GM12878 (cell line): ENCODE measurements at regions of chr12 and their contacts with region 1.

Region 1: DNA sequence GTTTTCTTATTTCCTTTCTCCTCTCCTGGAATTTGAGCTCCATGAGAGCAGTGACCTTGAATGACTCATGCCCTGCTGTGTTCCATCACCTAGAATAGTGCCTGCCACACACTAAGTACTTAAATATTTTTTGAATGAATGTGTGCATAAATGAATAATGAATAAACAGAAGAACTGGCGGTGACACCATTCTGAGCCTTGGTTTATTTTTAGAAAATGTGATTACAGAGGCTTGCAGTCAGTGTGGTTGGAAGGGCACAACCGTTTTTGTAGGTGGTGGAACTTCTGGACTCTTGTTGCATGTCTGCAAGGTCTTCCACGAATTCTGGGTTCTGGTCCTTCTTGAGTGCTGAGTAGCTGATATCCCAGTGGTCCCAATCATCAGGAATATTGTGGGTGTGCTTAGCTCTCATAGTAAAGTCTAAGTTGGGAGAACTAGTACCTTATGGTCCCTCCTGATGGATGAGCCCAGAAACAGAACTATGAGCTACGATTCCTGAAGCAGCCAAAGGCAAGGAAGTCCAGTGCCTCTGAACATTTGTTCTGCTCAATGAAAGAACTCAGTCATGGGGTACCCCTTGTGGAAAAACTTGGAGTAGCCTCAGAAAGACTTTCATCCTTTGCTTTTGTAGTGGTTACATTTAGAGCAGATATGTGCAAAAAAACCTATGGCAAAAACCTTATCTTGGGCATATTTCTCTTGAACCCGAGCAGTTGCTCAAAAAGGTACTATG is 28.8 kb upstream of the BHLHE41 start:
- DNase-seq: no peak
- ATAC-seq: no peak
- H3K4me3 ChIP-seq: no peak overlapping the region
- H3K27ac ChIP-seq: no peak overlapping the region
- H3K4me1 ChIP-seq: peaks cover 35% of the 10 kb centered on the region
- H3K27me3 ChIP-seq: no peaks in the 10 kb centered on the region
- CTCF ChIP-seq: no peak
- EP300 ChIP-seq: no peak
- POLR2A ChIP-seq: no peak
- RAD21 ChIP-seq: no peak

Region 2: GRCh38 chr12:25725931-25726330 is 427.7 kb before region 1 on chr12:
- CTCF ChIA-PET with region 1: no interaction called
- POLR2A ChIA-PET with region 1: no interaction called
- RAD21 ChIA-PET with region 1: no interaction called
- SMC1A ChIA-PET with region 1: no interaction called
- in situ Hi-C with region 1: no loop called
- intact Hi-C with region 1: no loop called
- DNase-seq: no peak
- ATAC-seq: no peak
- H3K4me3 ChIP-seq: no peak overlapping the region
- H3K27ac ChIP-seq: no peak overlapping the region
- H3K4me1 ChIP-seq: no peaks in the 10 kb centered on the region
- H3K27me3 ChIP-seq: no peaks in the 10 kb centered on the region; a peak in 1 of 4 replicates
- CTCF ChIP-seq: no peak
- EP300 ChIP-seq: no peak
- POLR2A ChIP-seq: no peak
- RAD21 ChIP-seq: no peak

Region 3: GRCh38 chr12:26126340-26127284 is 27.0 kb before region 1 on chr12:
- CTCF ChIA-PET with region 1: interaction called, 74 read pairs
- POLR2A ChIA-PET with region 1: interaction called, 9 read pairs
- RAD21 ChIA-PET with region 1: interaction called, 26 read pairs
- SMC1A ChIA-PET with region 1: interaction called, 91 read pairs
- in situ Hi-C with region 1: no loop called
- intact Hi-C with region 1: loop called (anchors 1 kb)
- DNase-seq: no peak
- ATAC-seq: peak; percentile 73
- H3K4me3 ChIP-seq: peak overlapping the region; percentile 80
- H3K27ac ChIP-seq: no peak overlapping the region
- H3K4me1 ChIP-seq: peaks cover 20% of the 10 kb centered on the region
- H3K27me3 ChIP-seq: peaks cover 10 to 41% of the 10 kb centered on the region in 2 experiments
- CTCF ChIP-seq: no peak
- EP300 ChIP-seq: no peak
- POLR2A ChIP-seq: no peak
- RAD21 ChIP-seq: no peak

Region 4: GRCh38 chr12:26172013-26172412 is 18.4 kb after region 1 on chr12:
- CTCF ChIA-PET with region 1: interaction called, 4 read pairs
- POLR2A ChIA-PET with region 1: interaction called, 4 read pairs
- RAD21 ChIA-PET with region 1: interaction called, 10 read pairs
- SMC1A ChIA-PET with region 1: interaction called, 22 read pairs
- in situ Hi-C with region 1: no loop called
- intact Hi-C with region 1: no loop called
- DNase-seq: no peak
- ATAC-seq: no peak
- H3K4me3 ChIP-seq: no peak overlapping the region
- H3K27ac ChIP-seq: no peak overlapping the region
- H3K4me1 ChIP-seq: no peaks in the 10 kb centered on the region; the same call in none of the 2 replicates
- H3K27me3 ChIP-seq: no peaks in the 10 kb centered on the region; a peak in 1 of 4 replicates
- CTCF ChIP-seq: no peak
- EP300 ChIP-seq: no peak
- POLR2A ChIP-seq: no peak
- RAD21 ChIP-seq: no peak

Region 5: GRCh38 chr12:26187014-26187798 is 33.6 kb after region 1 on chr12:
- CTCF ChIA-PET with region 1: no interaction called
- POLR2A ChIA-PET with region 1: no interaction called
- RAD21 ChIA-PET with region 1: interaction called, 18 read pairs
- SMC1A ChIA-PET with region 1: interaction called, 3 read pairs
- in situ Hi-C with region 1: no loop called
- intact Hi-C with region 1: no loop called
- DNase-seq: no peak
- ATAC-seq: peak; percentile 63
- H3K4me3 ChIP-seq: no peak overlapping the region
- H3K27ac ChIP-seq: no peak overlapping the region
- H3K4me1 ChIP-seq: no peaks in the 10 kb centered on the region
- H3K27me3 ChIP-seq: peaks cover 0 to 4% of the 10 kb centered on the region in 2 experiments; a peak in 2 of 4 replicates
- CTCF ChIP-seq: peak; percentile 5 to 31 (median 13); a peak in 1 of 6 replicates
- EP300 ChIP-seq: no peak
- POLR2A ChIP-seq: no peak
- RAD21 ChIP-seq: peak; percentile 30; the same call in 1 of the 2 replicates

Region 6: DNA sequence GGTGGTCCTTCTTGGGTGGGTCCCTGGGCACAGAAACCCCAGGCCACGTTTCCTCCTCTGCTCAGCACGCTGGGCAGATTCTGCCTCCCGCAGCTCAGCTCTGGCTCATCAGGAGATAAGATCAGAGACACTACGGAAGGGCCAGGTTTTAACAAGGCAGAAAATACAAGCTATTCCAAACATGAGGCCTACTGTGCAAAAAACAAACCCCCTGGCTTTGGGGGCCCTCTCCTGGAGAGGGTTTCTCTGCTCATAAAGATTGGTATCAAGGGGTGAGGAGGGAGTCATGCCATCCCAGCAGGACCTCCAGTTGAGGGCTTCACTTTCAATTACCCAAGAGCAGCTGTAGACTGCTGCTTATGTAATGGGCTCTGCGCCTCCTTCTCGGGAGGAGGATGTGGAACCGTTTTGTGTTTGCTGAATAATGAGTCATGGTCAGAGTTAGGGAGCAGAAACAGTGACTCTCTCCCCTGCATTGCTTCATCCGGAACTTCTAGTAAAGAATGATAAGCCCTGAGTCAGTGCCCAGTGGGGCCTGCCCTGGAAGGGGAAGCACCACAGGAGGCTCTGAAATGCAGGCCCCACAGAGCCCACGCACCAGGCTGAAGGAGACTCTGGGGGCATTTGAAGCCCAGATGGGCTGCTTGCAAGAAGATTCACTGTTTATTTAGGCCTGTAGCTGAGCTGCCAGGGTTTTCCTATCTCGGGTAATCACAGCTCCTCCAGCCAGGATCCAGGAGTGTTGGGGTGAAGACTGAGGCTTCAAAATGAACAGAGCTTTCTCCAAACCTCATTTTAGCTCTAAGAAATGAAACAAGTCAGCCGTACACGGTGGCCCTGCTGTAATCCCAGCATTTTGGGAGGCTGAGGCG is 121.1 kb after region 1 on chr12:
- CTCF ChIA-PET with region 1: interaction called, 15 read pairs
- POLR2A ChIA-PET with region 1: interaction called, 11 read pairs
- RAD21 ChIA-PET with region 1: interaction called, 76 read pairs
- SMC1A ChIA-PET with region 1: interaction called, 93 read pairs
- in situ Hi-C with region 1: no loop called
- intact Hi-C with region 1: loop called (anchors 2 kb)
- DNase-seq: peak; percentile 94
- ATAC-seq: peak; percentile 95
- H3K4me3 ChIP-seq: no peak overlapping the region
- H3K27ac ChIP-seq: peak overlapping the region; percentile 73
- H3K4me1 ChIP-seq: peaks cover 44% of the 10 kb centered on the region
- H3K27me3 ChIP-seq: no peaks in the 10 kb centered on the region
- CTCF ChIP-seq: peak in 1 of 3 experiments; percentile 18; a peak in 1 of 6 replicates
- EP300 ChIP-seq: peak; percentile 37 to 79; a peak in 3 of 4 replicates
- POLR2A ChIP-seq: peak; percentile 40; the same call in 1 of the 2 replicates
- RAD21 ChIP-seq: peak; percentile 37; the same call in 1 of the 2 replicates

Region 7: GRCh38 chr12:26304273-26304672 is 150.7 kb after region 1 on chr12:
- CTCF ChIA-PET with region 1: interaction called, 6 read pairs
- POLR2A ChIA-PET with region 1: interaction called, 23 read pairs
- RAD21 ChIA-PET with region 1: interaction called, 41 read pairs
- SMC1A ChIA-PET with region 1: interaction called, 56 read pairs
- in situ Hi-C with region 1: no loop called
- intact Hi-C with region 1: loop called (anchors 1 kb)
- DNase-seq: no peak
- ATAC-seq: no peak
- H3K4me3 ChIP-seq: no peak overlapping the region
- H3K27ac ChIP-seq: no peak overlapping the region
- H3K4me1 ChIP-seq: peaks cover 6% of the 10 kb centered on the region
- H3K27me3 ChIP-seq: no peaks in the 10 kb centered on the region; a peak in 1 of 4 replicates
- CTCF ChIP-seq: no peak
- EP300 ChIP-seq: no peak
- POLR2A ChIP-seq: no peak
- RAD21 ChIP-seq: no peak